ENCODE measurements at regions of chr6 and their contacts with region 1.

Region 1: GRCh38 chr6:113306552-113307145 is 550.5 kb upstream of the MARCKS start:
- DNase-seq: peak; percentile 81
- H3K4me3 Mint-ChIP-seq: no peak overlapping the region
- H3K27ac Mint-ChIP-seq: no peak overlapping the region
- H3K4me1 Mint-ChIP-seq: no peaks in the 10 kb centered on the region
- H3K27me3 Mint-ChIP-seq: no peaks in the 10 kb centered on the region
- CTCF ChIP-seq: peak; percentile 78

Region 2: DNA sequence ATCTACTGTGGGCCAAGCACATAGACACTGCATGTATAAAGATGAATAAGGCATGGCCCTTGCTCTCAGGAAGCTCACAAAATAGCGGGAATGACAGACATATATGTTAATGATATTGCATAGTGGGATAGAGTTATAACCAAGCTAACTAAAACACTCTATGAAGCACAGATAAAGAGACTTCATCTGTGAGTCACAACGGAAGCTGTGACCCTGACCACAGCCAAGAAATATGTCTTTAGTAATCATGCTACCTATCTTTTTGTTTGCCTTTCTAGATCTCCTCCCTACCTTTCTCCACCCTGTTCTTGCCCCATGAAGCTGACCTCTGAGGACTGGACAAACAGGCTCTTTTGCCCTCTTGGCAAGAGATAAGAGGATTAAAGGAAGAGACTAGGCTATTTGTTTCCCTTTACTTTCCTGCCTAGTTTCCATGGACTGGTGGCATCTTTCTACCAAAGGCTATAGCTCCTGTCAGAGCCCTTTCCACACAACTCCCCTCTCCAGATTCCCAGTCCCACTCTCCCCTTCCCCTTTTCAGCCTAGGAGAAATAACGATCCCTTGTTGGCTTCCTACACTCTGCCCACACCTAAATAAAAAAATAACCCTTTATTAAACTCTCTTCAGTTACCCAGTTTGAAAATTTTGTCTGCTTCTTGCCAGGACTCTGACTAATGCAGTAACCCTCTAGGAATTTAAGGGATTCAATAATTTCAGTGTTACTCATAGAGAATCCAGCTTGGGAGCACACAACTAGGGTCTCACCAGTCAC is 45.6 kb after region 1 on chr6:
- CTCF ChIA-PET with region 1: interaction called, 3 read pairs
- POLR2A ChIA-PET with region 1: no interaction called
- intact Hi-C with region 1: loop called (anchors 5 kb)
- DNase-seq: peak; percentile 70
- H3K4me3 Mint-ChIP-seq: peak overlapping the region; percentile 7
- H3K27ac Mint-ChIP-seq: peak overlapping the region; percentile 89
- H3K4me1 Mint-ChIP-seq: peaks cover 40% of the 10 kb centered on the region
- H3K27me3 Mint-ChIP-seq: no peaks in the 10 kb centered on the region
- CTCF ChIP-seq: no peak

Region 3: GRCh38 chr6:113414511-113414910 is 107.9 kb after region 1 on chr6:
- CTCF ChIA-PET with region 1: interaction called, 4 read pairs
- POLR2A ChIA-PET with region 1: no interaction called
- intact Hi-C with region 1: loop called (anchors 2 kb)
- DNase-seq: peak; percentile 79
- H3K4me3 Mint-ChIP-seq: no peak overlapping the region
- H3K27ac Mint-ChIP-seq: no peak overlapping the region
- H3K4me1 Mint-ChIP-seq: peaks cover 22% of the 10 kb centered on the region
- H3K27me3 Mint-ChIP-seq: no peaks in the 10 kb centered on the region
- CTCF ChIP-seq: peak; percentile 53

Region 4: DNA sequence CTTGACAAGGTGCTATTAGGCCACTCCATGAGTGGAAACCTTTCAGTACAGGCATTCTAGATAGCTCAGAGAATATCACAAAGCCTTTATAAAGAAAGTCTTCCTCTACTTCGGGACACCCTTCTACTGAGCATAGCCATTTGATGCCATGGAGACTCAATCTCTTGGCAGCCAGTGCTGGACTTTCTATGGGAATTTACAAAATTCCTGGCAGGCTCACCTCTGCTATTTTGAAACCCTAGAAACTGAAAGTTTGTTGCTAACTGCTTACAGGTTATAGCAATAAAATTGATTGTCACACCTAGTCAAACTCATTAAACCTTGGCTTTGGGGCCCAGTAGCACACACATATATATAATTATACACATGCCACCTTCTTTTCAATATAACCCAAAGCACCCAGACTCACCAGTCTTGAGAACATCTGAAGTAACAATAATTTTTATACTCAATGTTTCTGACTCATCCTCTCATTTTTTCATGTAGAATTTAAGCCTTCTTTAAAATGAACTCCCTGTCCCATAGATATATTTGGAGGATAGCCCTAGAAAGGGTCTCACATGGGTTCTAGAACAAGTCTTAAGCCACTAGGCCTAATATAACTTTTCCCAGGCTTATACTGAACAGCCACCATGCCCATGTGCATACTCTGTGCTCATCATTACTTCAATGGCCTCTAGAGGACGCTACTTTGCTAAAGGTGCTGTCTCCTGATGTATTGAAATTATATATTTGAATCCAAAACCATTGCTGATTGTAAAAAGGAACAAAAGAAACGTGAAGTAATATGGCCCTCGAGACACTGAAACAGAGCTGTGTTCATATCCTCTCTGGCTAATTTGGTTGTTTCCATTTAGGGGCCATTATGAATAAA is 182.4 kb after region 1 on chr6:
- CTCF ChIA-PET with region 1: interaction called, 3 read pairs
- POLR2A ChIA-PET with region 1: no interaction called
- intact Hi-C with region 1: loop called (anchors 2 kb)
- DNase-seq: no peak
- H3K4me3 Mint-ChIP-seq: no peak overlapping the region
- H3K27ac Mint-ChIP-seq: no peak overlapping the region
- H3K4me1 Mint-ChIP-seq: no peaks in the 10 kb centered on the region
- H3K27me3 Mint-ChIP-seq: no peaks in the 10 kb centered on the region
- CTCF ChIP-seq: no peak

Region 5: DNA sequence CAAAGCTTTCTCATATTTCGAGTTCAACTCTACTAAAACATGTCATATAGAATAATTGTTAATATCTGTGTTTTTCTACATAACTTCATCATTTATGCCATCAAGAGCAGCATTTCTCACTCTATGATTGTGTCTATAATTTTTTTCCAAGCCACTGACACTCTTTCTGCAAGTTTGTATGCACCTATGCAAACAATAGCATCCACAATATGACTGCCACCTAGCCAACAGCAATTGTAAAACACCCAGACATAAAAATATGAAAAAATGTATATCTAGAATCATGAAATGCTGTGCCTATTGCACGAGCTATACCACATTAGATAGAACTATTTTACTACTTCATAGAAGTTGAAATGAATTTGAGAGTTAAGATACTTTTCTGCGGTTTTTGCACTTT is 264.0 kb after region 1 on chr6:
- CTCF ChIA-PET with region 1: interaction called, 3 read pairs
- POLR2A ChIA-PET with region 1: no interaction called
- intact Hi-C with region 1: loop called (anchors 5 kb)
- DNase-seq: no peak
- H3K4me3 Mint-ChIP-seq: no peak overlapping the region
- H3K27ac Mint-ChIP-seq: no peak overlapping the region
- H3K4me1 Mint-ChIP-seq: no peaks in the 10 kb centered on the region
- H3K27me3 Mint-ChIP-seq: no peaks in the 10 kb centered on the region
- CTCF ChIP-seq: peak; percentile 21

Measured in MCF 10A (cell line).